HEK293 (cell line): ENCODE measurements at regions of chr12 and their contacts with region 1.

Region 1: DNA sequence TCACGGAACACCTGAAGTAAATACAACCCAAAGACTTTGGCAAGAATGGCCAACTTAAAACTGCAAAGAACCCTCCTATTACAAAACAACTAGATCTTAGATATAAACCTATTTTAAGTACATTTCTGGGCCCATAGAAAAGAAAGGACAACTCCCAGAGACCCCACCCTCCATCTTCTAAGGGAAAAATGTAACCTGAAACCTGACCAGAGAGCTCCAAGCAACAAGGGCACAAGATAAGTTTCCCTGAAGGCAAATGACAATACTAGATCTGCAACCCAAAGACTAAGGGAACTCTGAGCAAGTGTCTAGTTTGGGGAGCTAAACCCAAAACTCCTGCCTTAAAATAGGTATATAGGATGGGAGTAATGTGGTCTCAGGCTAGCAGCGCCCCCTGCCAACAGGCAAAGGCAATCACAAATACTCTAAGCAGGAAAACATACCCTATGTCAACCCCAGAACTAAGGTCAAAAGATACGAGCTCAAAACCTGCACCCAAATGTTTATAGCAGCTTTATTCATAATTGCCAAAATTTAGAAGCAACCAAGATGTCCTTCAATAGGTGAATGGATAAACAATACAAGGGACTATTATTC is 218.9 kb downstream of the ITPR2 start:
- H3K4me3 ChIP-seq: no peak overlapping the region
- H3K27ac ChIP-seq: no peak overlapping the region
- H3K4me1 ChIP-seq: no peaks in the 10 kb centered on the region
- CTCF ChIP-seq: 0 out of 2 replicates have a peak, but pooled peaks have one; percentile 9

Region 2: DNA sequence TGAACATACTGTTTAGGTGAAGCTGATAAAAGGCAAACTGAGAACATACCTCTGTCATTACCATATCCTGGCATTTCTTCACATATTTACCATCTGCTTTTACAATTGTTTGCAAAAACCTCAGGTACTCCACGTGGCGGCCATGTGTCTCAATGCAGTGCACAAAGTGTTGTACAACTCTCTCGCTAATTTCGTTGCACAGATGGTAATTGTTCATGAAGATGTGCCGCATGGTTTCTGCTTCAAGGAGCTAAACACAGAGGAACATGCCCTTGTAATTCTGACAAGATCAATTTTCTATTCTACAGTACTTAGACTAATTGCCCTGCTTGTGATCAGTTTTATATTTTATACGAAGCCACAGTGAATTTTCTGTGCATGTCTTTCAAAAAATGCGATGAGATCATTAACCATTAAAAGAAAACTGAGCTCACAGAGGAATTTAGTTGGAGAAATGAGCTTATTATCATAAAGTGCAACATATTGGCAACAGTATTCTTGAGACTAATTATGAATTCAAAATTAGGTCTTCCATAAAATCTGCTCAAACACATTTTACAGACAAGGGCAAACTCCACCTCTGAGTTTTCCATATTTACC is 14.9 kb before region 1 on chr12:
- CTCF ChIA-PET with region 1: interaction called, 11 read pairs
- POLR2A ChIA-PET with region 1: no interaction called
- H3K4me3 ChIP-seq: no peak overlapping the region
- H3K27ac ChIP-seq: no peak overlapping the region
- H3K4me1 ChIP-seq: no peaks in the 10 kb centered on the region
- CTCF ChIP-seq: no peak

Region 3: DNA sequence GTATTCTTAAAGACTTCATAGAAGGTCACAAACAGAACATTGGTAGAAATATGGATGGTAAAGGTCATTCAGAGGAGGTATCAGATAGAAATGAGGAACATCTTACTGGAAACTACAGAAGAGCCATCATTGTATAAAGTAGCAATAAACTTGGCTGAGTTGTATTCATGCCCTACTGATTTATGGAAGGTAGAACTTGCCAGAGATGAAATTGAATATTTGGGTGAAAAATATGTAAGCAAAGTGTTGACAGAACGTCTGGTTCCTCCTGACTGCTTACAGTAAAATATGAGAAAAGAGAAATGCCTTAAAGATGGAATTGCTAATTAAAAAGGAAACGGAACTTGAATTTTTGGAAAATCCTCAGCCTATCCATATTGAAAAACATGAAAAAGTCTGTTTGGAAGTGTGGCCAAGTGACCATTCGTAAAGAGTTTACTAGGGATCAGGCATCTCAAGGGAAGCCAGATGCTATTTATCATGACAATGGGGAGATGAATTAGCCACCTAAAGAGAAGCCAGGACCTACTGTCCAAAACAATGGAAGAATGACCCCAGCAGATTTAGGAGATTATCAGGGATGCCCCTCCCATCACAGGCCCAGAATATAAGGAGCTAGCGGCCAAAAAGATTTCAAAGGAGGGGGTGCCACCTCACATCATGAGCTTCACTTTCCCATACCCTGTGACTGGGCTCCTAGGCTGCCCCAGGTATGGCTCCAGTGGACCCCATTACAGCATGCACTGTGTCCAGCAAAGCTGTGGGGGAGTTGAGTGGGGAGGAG is 29.6 kb after region 1 on chr12:
- CTCF ChIA-PET with region 1: interaction called, 10 read pairs
- POLR2A ChIA-PET with region 1: no interaction called
- H3K4me3 ChIP-seq: no peak overlapping the region
- H3K27ac ChIP-seq: no peak overlapping the region
- H3K4me1 ChIP-seq: no peaks in the 10 kb centered on the region
- CTCF ChIP-seq: no peak

Region 4: DNA sequence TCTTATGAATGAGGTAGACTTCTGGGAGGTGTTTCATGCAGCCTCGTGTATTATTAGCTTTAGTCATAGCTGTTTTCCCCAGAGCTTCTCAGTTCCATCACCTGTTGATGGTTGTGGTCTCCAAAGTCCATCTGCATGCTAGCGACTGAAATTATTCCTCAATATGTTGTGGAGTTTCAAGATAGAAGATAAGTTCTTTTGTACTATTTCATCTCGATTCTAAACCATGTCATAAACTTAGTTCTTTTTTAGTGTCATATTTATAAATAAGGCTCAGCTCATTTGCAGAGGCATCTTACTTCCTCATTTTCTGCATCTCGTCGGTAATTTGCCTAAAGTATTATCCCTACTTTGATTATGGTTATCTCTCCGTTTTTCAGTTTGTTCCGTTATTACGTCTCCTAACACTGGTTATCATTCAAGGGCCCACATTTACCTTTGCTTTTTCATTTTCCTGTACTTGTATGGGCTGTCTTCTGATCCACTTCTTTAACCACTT is 99.8 kb after region 1 on chr12:
- CTCF ChIA-PET with region 1: no interaction called
- POLR2A ChIA-PET with region 1: no interaction called
- H3K4me3 ChIP-seq: no peak overlapping the region
- H3K27ac ChIP-seq: no peak overlapping the region
- H3K4me1 ChIP-seq: no peaks in the 10 kb centered on the region
- CTCF ChIP-seq: no peak